HEK293 (cell line): ENCODE measurements at regions of chr2 and their contacts with region 1.

Region 1: GRCh38 chr2:24971536-24972314 is at the start of gene DNAJC27:
- H3K4me3 ChIP-seq: peak within 1 kb of the TSS; percentile 86
- H3K27ac ChIP-seq: peak within 1 kb of the TSS; percentile 98
- H3K4me1 ChIP-seq: no peaks in the 10 kb centered on the region; the same call in 1 of the 2 replicates
- CTCF ChIP-seq: peak; percentile 75

Region 2: DNA sequence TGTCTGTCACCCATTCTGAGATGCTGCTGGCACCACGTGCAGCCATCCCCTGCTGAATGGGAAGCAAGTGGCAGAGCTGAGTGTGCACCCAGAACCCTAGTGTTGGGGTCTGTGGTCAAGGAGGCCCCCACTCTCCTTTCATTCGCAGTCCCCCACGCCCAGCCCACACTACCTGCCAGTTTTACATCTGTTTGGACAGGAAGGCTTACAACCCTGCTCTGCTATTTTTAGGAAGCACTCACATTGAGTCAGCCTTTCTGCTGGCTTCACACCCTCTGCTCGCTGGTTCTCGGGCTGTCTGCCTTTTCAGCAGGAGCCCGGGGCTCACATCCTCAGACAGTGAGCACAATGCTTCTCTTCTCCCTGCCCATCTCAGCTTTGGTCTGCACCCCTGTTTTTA is 41.0 kb before region 1 on chr2:
- CTCF ChIA-PET with region 1: no interaction called
- POLR2A ChIA-PET with region 1: no interaction called
- H3K4me3 ChIP-seq: no peak overlapping the region
- H3K27ac ChIP-seq: no peak overlapping the region
- H3K4me1 ChIP-seq: no peaks in the 10 kb centered on the region
- CTCF ChIP-seq: no peak

Region 3: DNA sequence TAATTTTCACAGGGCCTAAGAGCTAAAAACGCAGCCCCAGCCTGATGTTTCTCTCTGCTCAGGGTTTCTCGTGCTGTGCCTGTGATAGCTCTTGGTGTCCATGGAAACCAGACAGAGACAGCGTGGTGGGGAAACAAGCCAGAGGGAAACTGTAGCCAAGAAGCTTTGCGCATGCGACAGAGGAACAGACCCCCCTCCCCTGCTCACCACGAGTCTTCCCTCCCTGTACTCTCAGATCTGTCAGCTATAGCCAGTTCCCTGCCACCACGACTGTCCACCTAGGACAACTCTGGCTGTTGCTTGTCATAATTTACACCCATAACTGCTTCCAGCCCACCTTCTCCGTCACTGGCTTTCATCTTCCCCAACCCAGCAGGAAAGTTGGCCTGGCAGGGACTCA is 13.2 kb after region 1 on chr2:
- CTCF ChIA-PET with region 1: interaction called, 11 read pairs
- POLR2A ChIA-PET with region 1: no interaction called
- H3K4me3 ChIP-seq: no peak overlapping the region
- H3K27ac ChIP-seq: no peak overlapping the region
- H3K4me1 ChIP-seq: no peaks in the 10 kb centered on the region
- CTCF ChIP-seq: no peak

Region 4: DNA sequence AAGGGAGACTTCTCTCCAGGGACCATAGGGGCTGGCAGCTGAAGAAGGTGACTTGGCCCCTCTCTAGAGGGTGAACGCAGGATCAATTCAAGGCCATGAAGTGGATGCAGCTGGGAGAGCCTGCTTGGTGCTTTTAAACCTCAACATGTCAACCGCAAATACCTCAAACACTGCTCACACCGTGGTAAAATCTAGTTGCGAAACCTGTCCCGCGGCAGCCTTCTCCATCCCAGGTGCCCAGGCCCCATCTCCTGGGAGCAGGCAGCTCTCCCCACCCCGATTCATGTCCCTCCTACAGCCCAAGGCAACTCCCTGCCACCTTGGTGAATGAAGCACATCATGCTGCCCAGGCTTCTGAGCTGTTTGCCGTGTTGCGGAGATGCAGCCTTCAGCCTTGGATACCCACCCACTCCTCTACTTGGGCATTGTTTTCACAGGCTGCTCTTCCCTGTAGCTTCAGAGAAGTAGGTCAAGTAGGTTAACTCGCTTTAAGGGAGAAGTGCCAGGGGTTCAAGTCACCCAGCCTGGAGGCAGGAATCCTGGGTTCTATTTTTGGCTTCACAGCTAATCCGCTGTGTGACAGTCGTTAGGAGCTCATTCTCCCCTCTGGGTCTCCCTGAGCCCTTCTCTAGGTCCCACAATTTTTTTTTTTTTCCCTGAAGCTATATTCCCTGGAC is 64.0 kb after region 1 on chr2:
- CTCF ChIA-PET with region 1: interaction called, 23 read pairs
- POLR2A ChIA-PET with region 1: interaction called, 8 read pairs
- H3K4me3 ChIP-seq: no peak overlapping the region
- H3K27ac ChIP-seq: no peak overlapping the region
- H3K4me1 ChIP-seq: no peaks in the 10 kb centered on the region
- CTCF ChIP-seq: no peak

Region 5: DNA sequence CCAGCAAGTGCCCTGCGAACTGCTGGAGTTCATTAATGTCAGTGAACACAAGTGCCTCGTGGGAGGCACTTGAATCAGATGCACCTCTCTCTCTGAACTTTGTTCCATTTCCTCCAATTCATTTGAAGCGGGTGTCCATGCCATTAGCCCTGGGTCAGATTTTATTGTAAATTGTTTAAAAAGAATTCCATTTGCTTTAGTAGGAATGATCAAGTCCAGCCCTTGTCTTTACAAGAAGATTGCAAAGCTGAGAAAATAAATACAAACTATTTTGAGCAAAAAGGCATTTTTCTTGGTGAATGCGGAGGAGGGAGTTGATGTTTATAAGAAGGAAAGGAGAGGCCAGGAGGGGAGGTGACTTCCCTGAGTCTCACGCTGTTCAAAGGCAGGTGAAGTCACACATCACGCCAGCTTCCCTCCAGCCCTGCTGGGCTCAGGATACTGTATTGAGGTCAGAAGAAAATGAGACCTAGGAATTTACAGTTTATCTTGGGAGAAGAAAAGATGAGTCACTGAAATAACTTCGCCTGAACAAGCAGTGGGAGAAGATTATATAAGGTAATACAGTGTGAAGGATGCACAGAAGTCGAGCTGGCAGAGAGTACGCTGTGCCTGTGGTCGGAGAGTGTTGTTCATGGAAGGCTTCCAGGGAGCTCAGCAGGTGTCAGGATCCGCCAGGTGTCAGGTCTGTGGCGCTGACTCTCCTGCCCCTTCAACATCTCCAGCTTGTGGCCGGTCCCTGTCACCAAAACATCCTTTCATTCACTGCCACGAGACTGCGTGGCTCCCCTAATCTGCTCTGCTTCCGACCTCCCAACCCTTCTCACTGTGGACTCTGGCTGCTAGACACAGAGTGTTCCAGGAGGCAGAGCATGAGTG is 106.7 kb after region 1 on chr2:
- CTCF ChIA-PET with region 1: interaction called, 10 read pairs
- POLR2A ChIA-PET with region 1: interaction called, 3 read pairs
- H3K4me3 ChIP-seq: peak overlapping the region; percentile 4; the same call in 1 of the 2 replicates
- H3K27ac ChIP-seq: peak overlapping the region; percentile 8; the same call in 1 of the 2 replicates
- H3K4me1 ChIP-seq: peaks cover 21% of the 10 kb centered on the region
- CTCF ChIP-seq: no peak

Region 6: DNA sequence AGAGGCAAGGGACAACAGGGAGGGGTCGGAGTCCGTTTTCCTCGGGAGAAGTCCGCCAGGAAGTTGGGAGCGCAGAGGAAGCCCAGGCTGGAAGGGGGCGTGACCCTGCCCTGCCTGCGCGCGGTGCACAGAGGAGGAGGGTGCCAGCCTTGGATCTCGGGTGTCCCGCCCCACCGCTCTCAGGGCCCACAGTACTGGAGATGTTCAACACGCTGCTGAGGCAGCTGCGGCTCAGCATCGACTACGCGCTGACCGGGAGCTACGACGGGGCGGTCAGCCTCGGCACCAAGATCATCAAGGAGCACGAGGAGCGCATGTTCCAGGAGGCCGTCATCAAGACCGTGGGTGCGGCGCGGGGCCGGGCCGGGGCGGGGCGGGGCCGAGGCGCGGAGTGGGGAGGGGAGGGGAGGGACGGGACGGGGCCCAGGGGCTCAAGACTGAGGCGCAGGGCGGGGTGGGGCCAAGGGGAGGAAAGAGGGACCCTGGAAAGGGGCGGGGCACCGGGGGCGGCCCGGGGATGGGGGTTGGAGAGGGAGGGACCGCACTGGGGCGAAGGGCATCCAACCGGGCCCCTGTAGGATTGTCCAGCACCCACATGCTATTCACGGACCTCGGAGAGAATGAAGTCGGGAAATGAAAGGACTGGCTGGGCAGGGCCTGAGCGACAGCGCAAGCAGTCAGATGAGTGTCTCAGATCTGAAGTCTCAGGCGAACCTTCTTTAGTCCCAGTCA is 160.0 kb after region 1 on chr2:
- CTCF ChIA-PET with region 1: interaction called, 114 read pairs
- POLR2A ChIA-PET with region 1: interaction called, 10 read pairs
- H3K4me3 ChIP-seq: no peak overlapping the region
- H3K27ac ChIP-seq: no peak overlapping the region
- H3K4me1 ChIP-seq: no peaks in the 10 kb centered on the region
- CTCF ChIP-seq: no peak

Region 7: DNA sequence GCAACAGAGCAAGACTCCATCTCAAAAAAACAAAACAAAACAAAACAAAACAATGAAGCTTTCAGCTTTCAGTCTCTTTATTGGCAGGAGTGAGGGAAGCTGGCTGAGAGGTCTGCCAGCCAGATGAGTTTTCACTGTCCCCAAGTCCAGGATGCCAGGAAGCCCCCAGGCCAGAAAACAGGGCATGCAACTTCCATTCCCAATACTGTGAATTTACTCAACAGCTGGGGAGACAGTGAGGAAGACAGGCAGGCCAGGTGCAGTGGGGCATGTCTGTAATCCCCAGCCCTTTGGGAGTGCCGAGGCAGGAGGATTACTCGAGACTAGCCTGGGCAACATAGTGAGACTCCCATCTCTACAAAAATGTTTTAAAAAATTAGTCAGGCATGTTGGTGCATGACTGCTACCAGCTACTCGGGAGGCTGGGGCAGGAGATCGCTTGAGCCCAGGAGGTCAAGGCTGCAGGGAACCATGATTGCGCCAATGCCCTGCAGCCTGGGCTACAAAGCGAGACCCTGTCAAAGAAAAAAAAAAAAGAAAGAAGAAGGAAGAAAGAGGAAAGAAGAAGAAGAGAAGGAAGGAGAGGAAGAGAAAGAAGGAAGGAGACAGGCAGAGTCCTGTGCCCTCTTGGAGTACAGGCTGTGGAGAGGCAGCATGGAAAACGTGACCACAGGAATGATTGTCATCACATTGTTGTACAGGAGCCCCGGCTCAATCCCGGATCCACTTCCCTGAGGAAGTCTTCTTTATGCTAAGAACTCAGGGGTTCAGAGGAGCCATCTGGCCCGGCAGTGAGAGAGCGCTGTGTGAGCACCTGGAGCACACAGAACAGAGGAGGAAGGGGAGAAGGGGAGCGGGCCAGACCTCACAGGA is 225.8 kb after region 1 on chr2:
- CTCF ChIA-PET with region 1: interaction called, 48 read pairs
- POLR2A ChIA-PET with region 1: no interaction called
- H3K4me3 ChIP-seq: no peak overlapping the region
- H3K27ac ChIP-seq: no peak overlapping the region
- H3K4me1 ChIP-seq: no peaks in the 10 kb centered on the region; the same call in 1 of the 2 replicates
- CTCF ChIP-seq: no peak